MCF 10A (cell line): ENCODE measurements at regions of chr1 and their contacts with region 1.

Region 1: DNA sequence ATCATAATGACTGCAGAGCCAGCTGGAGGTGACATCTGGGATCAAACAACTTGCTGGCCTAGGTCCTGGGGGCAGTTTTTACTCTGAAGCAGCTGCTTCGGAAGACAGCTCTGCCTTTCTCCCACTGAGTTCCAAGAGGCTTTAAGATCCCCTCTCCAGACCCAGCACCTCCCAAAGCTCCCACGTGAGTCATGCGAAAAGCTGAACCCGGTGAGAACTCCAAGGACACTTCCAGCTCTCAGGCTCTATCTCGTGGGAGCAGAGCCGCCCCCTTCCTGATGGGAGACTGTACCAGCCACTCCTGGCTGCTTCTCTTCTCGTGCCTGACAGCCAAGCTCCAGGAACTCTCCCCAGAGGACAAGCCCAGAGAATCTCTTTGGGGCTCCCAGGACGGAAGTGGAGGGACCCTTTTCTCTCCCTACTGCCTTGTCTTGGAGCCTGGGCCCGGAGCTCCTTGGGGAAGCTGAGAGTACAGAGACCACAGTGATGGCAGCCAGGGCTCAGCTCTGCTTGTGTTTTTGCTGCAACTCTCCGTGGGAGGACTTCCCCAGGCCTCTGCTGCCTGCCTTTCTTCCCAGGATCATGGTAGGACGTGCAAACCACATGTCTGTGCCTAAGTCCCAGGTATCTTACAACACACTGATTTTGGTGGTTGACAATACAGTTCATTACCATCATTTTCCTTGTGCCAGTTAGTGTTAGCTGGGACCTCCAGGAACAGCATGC is 40.6 kb downstream of the STUM start:
- DNase-seq: peak; percentile 32
- H3K4me3 Mint-ChIP-seq: no peak overlapping the region
- H3K27ac Mint-ChIP-seq: no peak overlapping the region
- H3K4me1 Mint-ChIP-seq: peaks cover 1% of the 10 kb centered on the region
- H3K27me3 Mint-ChIP-seq: peaks cover 19% of the 10 kb centered on the region
- CTCF ChIP-seq: no peak

Region 2: GRCh38 chr1:226565476-226565875 is 23.7 kb before region 1 on chr1:
- CTCF ChIA-PET with region 1: interaction called, 6 read pairs
- POLR2A ChIA-PET with region 1: interaction called, 4 read pairs
- intact Hi-C with region 1: loop called (anchors 2 kb)
- DNase-seq: no peak
- H3K4me3 Mint-ChIP-seq: no peak overlapping the region
- H3K27ac Mint-ChIP-seq: no peak overlapping the region
- H3K4me1 Mint-ChIP-seq: no peaks in the 10 kb centered on the region
- H3K27me3 Mint-ChIP-seq: peaks cover 45% of the 10 kb centered on the region
- CTCF ChIP-seq: no peak